PC-3 (cell line): ENCODE measurements at regions of chr6 and their contacts with region 1.

Region 1: GRCh38 chr6:2988426-2989331 is 11.0 kb upstream of the NQO2 start:
- DNase-seq: peak; percentile 96
- ATAC-seq: peak; percentile 66
- H3K4me3 ChIP-seq: peak overlapping the region; percentile 76
- H3K27ac ChIP-seq: peak overlapping the region; percentile 97
- H3K4me1 ChIP-seq: peaks cover 39% of the 10 kb centered on the region
- H3K27me3 ChIP-seq: no peaks in the 10 kb centered on the region
- CTCF ChIP-seq: peak; percentile 86

Region 2: DNA sequence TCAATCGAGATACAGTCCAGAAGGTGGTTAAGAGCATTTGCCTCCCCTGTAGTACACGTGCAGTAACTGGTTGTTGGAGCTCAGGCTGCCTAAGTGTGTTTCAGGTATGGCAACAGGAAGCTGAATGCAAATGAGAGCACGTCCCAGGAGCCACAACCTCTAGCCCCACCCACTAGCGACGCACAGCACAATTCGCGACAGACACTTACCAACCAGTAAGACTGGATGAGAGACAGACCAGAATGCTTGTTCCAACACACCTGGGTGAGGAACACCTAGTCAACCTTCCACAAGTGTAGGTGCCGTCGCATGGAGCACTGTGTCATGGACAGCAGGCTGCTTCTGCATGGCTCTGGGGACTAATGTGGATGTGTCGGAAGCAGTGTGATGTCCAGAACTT is 139.8 kb before region 1 on chr6:
- CTCF ChIA-PET with region 1: interaction called, 12 read pairs
- POLR2A ChIA-PET with region 1: interaction called, 7 read pairs
- intact Hi-C with region 1: loop called (anchors 1 kb)
- DNase-seq: no peak
- ATAC-seq: no peak
- H3K4me3 ChIP-seq: no peak overlapping the region
- H3K27ac ChIP-seq: no peak overlapping the region
- H3K4me1 ChIP-seq: peaks cover 33% of the 10 kb centered on the region
- H3K27me3 ChIP-seq: no peaks in the 10 kb centered on the region
- CTCF ChIP-seq: no peak

Region 3: GRCh38 chr6:2952557-2953095 is 36.1 kb before region 1 on chr6:
- CTCF ChIA-PET with region 1: interaction called, 71 read pairs
- POLR2A ChIA-PET with region 1: interaction called, 7 read pairs
- intact Hi-C with region 1: loop called (anchors 1 kb)
- DNase-seq: peak; percentile 76
- ATAC-seq: peak; percentile 79
- H3K4me3 ChIP-seq: no peak overlapping the region
- H3K27ac ChIP-seq: 0 out of 2 replicates have a peak overlapping the region, but pooled peaks have one; percentile 2
- H3K4me1 ChIP-seq: peaks cover 13% of the 10 kb centered on the region
- H3K27me3 ChIP-seq: no peaks in the 10 kb centered on the region
- CTCF ChIP-seq: peak; percentile 98

Region 4: GRCh38 chr6:2971420-2972218 is 17.1 kb before region 1 on chr6 and contains the start of gene SERPINB6:
- CTCF ChIA-PET with region 1: no interaction called
- POLR2A ChIA-PET with region 1: no interaction called
- intact Hi-C with region 1: loop called (anchors 1 kb)
- DNase-seq: peak; percentile 56
- ATAC-seq: peak; percentile 75
- H3K4me3 ChIP-seq: peak within 1 kb of the TSS; percentile 87
- H3K27ac ChIP-seq: peak within 1 kb of the TSS; percentile 80
- H3K4me1 ChIP-seq: peaks cover 32% of the 10 kb centered on the region
- H3K27me3 ChIP-seq: no peaks in the 10 kb centered on the region
- CTCF ChIP-seq: no peak; the same call in 1 of the 2 replicates
- total RNA-seq, gene SERPINB6: 119 and 140 TPM in 2 replicates

Region 5: GRCh38 chr6:3258720-3259490 is 270.2 kb after region 1 on chr6 and contains the start of gene PSMG4:
- CTCF ChIA-PET with region 1: no interaction called
- POLR2A ChIA-PET with region 1: no interaction called
- intact Hi-C with region 1: loop called (anchors 10 kb)
- DNase-seq: peak; percentile 88
- ATAC-seq: peak; percentile 83
- H3K4me3 ChIP-seq: peak within 1 kb of the TSS; percentile 84
- H3K27ac ChIP-seq: peak within 1 kb of the TSS; percentile 28
- H3K4me1 ChIP-seq: peaks cover 14% of the 10 kb centered on the region
- H3K27me3 ChIP-seq: no peaks in the 10 kb centered on the region
- CTCF ChIP-seq: no peak
- total RNA-seq, gene PSMG4: 51.9 and 63.3 TPM in 2 replicates